Naive thymus-derived CD4-positive, alpha-beta T cell (primary cell): ENCODE measurements at regions of chr6 and their contacts with region 1.

Region 1: GRCh38 chr6:26234421-26235296 is 130.3 kb upstream of the BTN3A2 start:
- DNase-seq: peak; percentile 48 to 94 (median 85)
- ATAC-seq: peak; percentile 80
- H3K4me3 ChIP-seq: peak overlapping the region; percentile 93
- H3K4me3 Mint-ChIP-seq: peak overlapping the region; percentile 87 to 99 (median 94)
- H3K27ac ChIP-seq: peak overlapping the region; percentile 87
- H3K27ac Mint-ChIP-seq: peak overlapping the region; percentile 93 to 100 (median 98)
- H3K4me1 ChIP-seq: peaks cover under 1 to 18% of the 10 kb centered on the region in 2 donors
- H3K4me1 Mint-ChIP-seq: peaks cover 18 to 52% (median 38%) of the 10 kb centered on the region in 7 donors
- H3K27me3 ChIP-seq: no peaks in the 10 kb centered on the region
- H3K27me3 Mint-ChIP-seq: peaks cover 0 to 15% (median 0%) of the 10 kb centered on the region in 5 donors

Region 2: GRCh38 chr6:26045065-26045927 is 189.4 kb before region 1 on chr6:
- CTCF ChIA-PET with region 1: no interaction called
- POLR2A ChIA-PET with region 1: interaction called, 39 read pairs
- intact Hi-C with region 1: no loop called
- DNase-seq: peak; percentile 39 to 93 (median 89)
- ATAC-seq: peak; percentile 68
- H3K4me3 ChIP-seq: peak overlapping the region; percentile 91
- H3K4me3 Mint-ChIP-seq: peak overlapping the region; percentile 87 to 98 (median 94)
- H3K27ac ChIP-seq: peak overlapping the region; percentile 90
- H3K27ac Mint-ChIP-seq: peak overlapping the region; percentile 80 to 98 (median 95)
- H3K4me1 ChIP-seq: peaks cover 7 to 19% of the 10 kb centered on the region in 2 donors
- H3K4me1 Mint-ChIP-seq: peaks cover 8 to 51% (median 20%) of the 10 kb centered on the region in 7 donors
- H3K27me3 ChIP-seq: no peaks in the 10 kb centered on the region
- H3K27me3 Mint-ChIP-seq: peaks cover 0 to 3% (median 0%) of the 10 kb centered on the region in 5 donors

Region 3: GRCh38 chr6:26183581-26184366 is 50.9 kb before region 1 on chr6:
- CTCF ChIA-PET with region 1: interaction called, 3 read pairs
- POLR2A ChIA-PET with region 1: interaction called, 2,165 read pairs
- intact Hi-C with region 1: no loop called
- DNase-seq: peak; percentile 43 to 83 (median 77)
- ATAC-seq: peak; percentile 91
- H3K4me3 ChIP-seq: peak overlapping the region; percentile 82
- H3K4me3 Mint-ChIP-seq: peak overlapping the region; percentile 84 to 99 (median 98)
- H3K27ac ChIP-seq: peak overlapping the region; percentile 76
- H3K27ac Mint-ChIP-seq: peak overlapping the region; percentile 83 to 99 (median 90)
- H3K4me1 ChIP-seq: peaks cover 13 to 30% of the 10 kb centered on the region in 2 donors
- H3K4me1 Mint-ChIP-seq: peaks cover 19 to 59% (median 49%) of the 10 kb centered on the region in 7 donors
- H3K27me3 ChIP-seq: no peaks in the 10 kb centered on the region
- H3K27me3 Mint-ChIP-seq: no peaks in the 10 kb centered on the region

Region 4: GRCh38 chr6:26249957-26250697 is 15.5 kb after region 1 on chr6:
- CTCF ChIA-PET with region 1: interaction called, 9 read pairs
- POLR2A ChIA-PET with region 1: interaction called, 48 read pairs
- intact Hi-C with region 1: loop called (anchors 1 kb)
- DNase-seq: peak; percentile 53 to 85 (median 80)
- ATAC-seq: peak; percentile 85
- H3K4me3 ChIP-seq: peak overlapping the region; percentile 84
- H3K4me3 Mint-ChIP-seq: peak overlapping the region; percentile 88 to 100 (median 96)
- H3K27ac ChIP-seq: peak overlapping the region; percentile 71
- H3K27ac Mint-ChIP-seq: peak overlapping the region; percentile 85 to 97 (median 94)
- H3K4me1 ChIP-seq: peaks cover 4 to 19% of the 10 kb centered on the region in 2 donors
- H3K4me1 Mint-ChIP-seq: peaks cover 20 to 48% (median 39%) of the 10 kb centered on the region in 7 donors
- H3K27me3 ChIP-seq: no peaks in the 10 kb centered on the region
- H3K27me3 Mint-ChIP-seq: no peaks in the 10 kb centered on the region

Region 5: DNA sequence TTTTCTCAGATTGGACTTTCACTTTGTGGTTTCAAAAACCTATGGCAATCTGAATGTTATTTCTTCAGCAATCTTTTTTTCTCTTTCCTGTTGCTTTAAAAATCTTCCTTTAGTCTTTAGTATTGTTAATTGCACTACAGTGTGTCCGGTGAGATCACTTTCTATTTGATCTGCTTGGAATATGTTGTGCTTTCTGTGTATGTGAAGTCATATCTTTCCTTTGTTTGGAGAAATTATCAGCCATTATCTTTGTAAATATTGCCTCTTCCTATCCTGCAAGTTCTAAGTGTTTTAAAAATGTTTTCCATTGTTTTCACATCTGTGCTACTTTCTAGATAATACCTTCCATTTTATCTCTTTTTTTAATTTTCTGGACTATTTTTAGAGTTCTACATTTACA is 841.5 kb after region 1 on chr6:
- CTCF ChIA-PET with region 1: no interaction called
- POLR2A ChIA-PET with region 1: no interaction called
- intact Hi-C with region 1: no loop called
- DNase-seq: no peak
- ATAC-seq: no peak
- H3K4me3 ChIP-seq: no peak overlapping the region
- H3K4me3 Mint-ChIP-seq: no peak overlapping the region
- H3K27ac ChIP-seq: no peak overlapping the region
- H3K27ac Mint-ChIP-seq: no peak overlapping the region
- H3K4me1 ChIP-seq: no peaks in the 10 kb centered on the region
- H3K4me1 Mint-ChIP-seq: peaks cover 0 to 8% (median 7%) of the 10 kb centered on the region in 7 donors
- H3K27me3 ChIP-seq: peaks cover 0 to 11% of the 10 kb centered on the region in 2 donors
- H3K27me3 Mint-ChIP-seq: peaks cover 19 to 54% (median 37%) of the 10 kb centered on the region in 5 donors

Region 6: DNA sequence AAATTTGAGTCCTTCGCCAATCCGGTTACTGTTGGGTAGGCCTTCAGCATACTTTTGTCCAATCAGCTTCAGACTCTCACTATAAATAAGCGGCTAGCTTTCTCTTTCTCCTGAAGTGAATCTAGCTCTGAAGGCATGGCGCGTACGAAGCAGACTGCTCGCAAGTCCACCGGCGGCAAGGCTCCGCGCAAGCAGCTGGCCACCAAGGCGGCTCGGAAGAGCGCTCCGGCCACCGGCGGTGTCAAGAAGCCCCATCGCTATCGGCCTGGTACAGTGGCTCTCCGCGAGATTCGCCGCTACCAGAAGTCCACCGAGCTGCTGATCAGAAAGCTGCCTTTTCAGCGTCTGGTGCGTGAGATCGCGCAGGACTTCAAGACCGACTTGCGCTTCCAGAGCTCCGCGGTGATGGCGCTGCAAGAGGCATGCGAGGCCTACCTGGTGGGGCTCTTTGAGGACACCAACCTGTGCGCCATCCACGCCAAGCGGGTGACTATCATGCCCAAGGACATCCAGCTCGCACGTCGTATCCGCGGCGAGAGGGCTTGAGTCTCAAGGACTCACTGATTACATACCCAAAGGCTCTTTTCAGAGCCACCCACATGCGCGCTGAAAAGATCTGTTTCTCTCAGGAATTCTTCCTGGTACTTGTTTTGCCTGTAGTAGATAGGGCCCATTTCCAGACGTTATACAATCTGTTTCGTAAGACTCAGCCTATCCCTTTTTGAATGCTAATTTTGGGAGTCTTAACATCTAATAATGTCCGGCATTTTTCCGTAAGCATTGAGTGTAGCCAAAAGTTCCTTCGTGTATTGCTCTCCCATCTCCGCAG is 1575.5 kb after region 1 on chr6:
- CTCF ChIA-PET with region 1: no interaction called
- POLR2A ChIA-PET with region 1: interaction called, 50 read pairs
- intact Hi-C with region 1: no loop called
- DNase-seq: peak; percentile 66 to 96 (median 92)
- ATAC-seq: peak; percentile 71
- H3K4me3 ChIP-seq: peak overlapping the region; percentile 76
- H3K4me3 Mint-ChIP-seq: peak overlapping the region; percentile 81 to 97 (median 94)
- H3K27ac ChIP-seq: peak overlapping the region; percentile 86
- H3K27ac Mint-ChIP-seq: peak overlapping the region; percentile 95 to 99 (median 98)
- H3K4me1 ChIP-seq: peaks cover 20 to 42% of the 10 kb centered on the region in 2 donors
- H3K4me1 Mint-ChIP-seq: peaks cover 18 to 82% (median 61%) of the 10 kb centered on the region in 7 donors
- H3K27me3 ChIP-seq: no peaks in the 10 kb centered on the region
- H3K27me3 Mint-ChIP-seq: peaks cover 0 to 9% (median 0%) of the 10 kb centered on the region in 5 donors

Region 7: GRCh38 chr6:27871924-27872638 is 1637.4 kb after region 1 on chr6:
- CTCF ChIA-PET with region 1: no interaction called
- POLR2A ChIA-PET with region 1: interaction called, 13 read pairs
- intact Hi-C with region 1: no loop called
- DNase-seq: peak; percentile 68 to 97 (median 94)
- ATAC-seq: peak; percentile 88
- H3K4me3 ChIP-seq: peak overlapping the region; percentile 69
- H3K4me3 Mint-ChIP-seq: peak overlapping the region; percentile 83 to 99 (median 94)
- H3K27ac ChIP-seq: peak overlapping the region; percentile 84
- H3K27ac Mint-ChIP-seq: peak overlapping the region; percentile 95 to 98 (median 97)
- H3K4me1 ChIP-seq: peaks cover under 1 to 19% of the 10 kb centered on the region in 2 donors
- H3K4me1 Mint-ChIP-seq: peaks cover 15 to 69% (median 42%) of the 10 kb centered on the region in 7 donors
- H3K27me3 ChIP-seq: no peaks in the 10 kb centered on the region
- H3K27me3 Mint-ChIP-seq: peaks cover 0 to 8% (median 0%) of the 10 kb centered on the region in 5 donors